ENCODE measurements at regions of chr14 and their contacts with region 1.

Region 1: DNA sequence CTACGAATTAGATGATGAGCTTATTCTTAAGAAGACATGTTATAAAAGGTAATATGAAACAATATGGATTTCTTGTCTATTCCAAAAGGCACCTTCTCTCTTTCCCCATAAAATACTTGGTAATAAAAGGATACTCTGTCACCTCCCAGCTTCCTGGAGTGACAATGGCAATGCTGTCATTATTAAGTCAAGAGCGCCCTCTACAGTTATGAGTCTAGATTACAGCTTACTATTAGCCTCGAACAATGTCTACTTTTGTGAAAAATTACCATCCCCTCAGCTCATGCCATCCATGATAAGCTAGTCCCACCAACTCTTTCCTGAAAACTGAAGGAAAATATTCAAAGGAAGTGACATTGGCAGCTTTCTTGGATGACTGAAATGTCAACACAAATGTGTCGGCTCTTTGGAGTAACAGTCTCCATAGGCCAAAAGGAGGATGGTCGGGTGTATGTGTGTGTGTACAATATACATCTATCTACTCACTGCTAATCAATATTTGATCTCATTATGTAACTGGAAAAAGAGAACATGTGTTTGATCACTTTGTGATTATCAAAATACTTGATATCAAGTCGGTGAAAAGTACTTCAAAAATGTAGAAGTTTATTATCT is 48.7 kb upstream of the CDKN3 start:
- DNase-seq: no peak
- H3K4me3 ChIP-seq: no peak overlapping the region
- H3K27ac ChIP-seq: no peak overlapping the region
- H3K4me1 ChIP-seq: peaks cover 0 to 9% (median 6%) of the 10 kb centered on the region in 4 experiments; a peak in 6 of 7 replicates
- H3K27me3 ChIP-seq: no peaks in the 10 kb centered on the region
- CTCF ChIP-seq: peak in 2 of 3 experiments; percentile 76 to 84; a peak in 3 of 4 replicates
- EP300 ChIP-seq: no peak
- POLR2A ChIP-seq: no peak
- RAD21 ChIP-seq: peak; percentile 95 to 97

Region 2: DNA sequence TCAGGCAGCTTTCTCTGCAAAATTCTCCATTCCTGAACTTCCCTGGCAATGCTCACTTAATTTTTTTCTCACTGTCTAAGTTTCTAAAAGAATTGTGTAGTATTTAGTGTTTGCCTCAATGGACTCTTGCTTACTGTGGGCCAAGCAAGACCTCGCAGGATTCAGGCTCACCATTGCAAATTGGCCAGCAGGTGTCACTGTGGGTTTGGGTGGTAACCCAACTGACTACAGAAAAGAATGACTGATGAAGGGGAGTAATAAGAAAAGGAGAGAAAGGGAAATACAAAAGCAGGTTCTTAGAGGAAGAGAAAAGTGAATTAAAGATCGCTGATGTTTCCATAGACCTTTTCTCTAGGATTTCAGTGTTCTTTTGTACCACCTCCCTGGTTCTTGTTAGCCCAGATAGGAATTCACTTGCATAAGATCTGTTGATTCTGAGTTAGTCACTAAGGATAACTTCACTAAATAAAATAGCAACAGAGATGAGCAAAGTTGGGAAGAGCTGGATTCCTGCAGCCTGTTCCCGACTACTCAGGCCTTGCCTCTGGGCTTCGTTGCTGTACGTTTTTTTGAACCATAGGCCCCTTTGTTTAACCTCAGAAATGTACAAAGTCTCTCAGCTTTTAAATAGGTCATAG is 808.5 kb before region 1 on chr14:
- CTCF ChIA-PET with region 1: interaction called, 21 read pairs
- POLR2A ChIA-PET with region 1: no interaction called
- DNase-seq: peak; percentile 70 to 91
- H3K4me3 ChIP-seq: no peak overlapping the region
- H3K27ac ChIP-seq: no peak overlapping the region
- H3K4me1 ChIP-seq: no peaks in the 10 kb centered on the region
- H3K27me3 ChIP-seq: no peaks in the 10 kb centered on the region
- CTCF ChIP-seq: peak; percentile 75 to 83 (median 82)
- EP300 ChIP-seq: no peak
- POLR2A ChIP-seq: no peak
- RAD21 ChIP-seq: peak; percentile 96 to 97

Region 3: GRCh38 chr14:54189748-54190354 is 158.3 kb before region 1 on chr14:
- CTCF ChIA-PET with region 1: interaction called, 24 read pairs
- POLR2A ChIA-PET with region 1: no interaction called
- DNase-seq: no peak
- H3K4me3 ChIP-seq: no peak overlapping the region
- H3K27ac ChIP-seq: no peak overlapping the region
- H3K4me1 ChIP-seq: no peaks in the 10 kb centered on the region
- H3K27me3 ChIP-seq: no peaks in the 10 kb centered on the region
- CTCF ChIP-seq: no peak
- EP300 ChIP-seq: no peak
- POLR2A ChIP-seq: no peak
- RAD21 ChIP-seq: no peak

Region 4: DNA sequence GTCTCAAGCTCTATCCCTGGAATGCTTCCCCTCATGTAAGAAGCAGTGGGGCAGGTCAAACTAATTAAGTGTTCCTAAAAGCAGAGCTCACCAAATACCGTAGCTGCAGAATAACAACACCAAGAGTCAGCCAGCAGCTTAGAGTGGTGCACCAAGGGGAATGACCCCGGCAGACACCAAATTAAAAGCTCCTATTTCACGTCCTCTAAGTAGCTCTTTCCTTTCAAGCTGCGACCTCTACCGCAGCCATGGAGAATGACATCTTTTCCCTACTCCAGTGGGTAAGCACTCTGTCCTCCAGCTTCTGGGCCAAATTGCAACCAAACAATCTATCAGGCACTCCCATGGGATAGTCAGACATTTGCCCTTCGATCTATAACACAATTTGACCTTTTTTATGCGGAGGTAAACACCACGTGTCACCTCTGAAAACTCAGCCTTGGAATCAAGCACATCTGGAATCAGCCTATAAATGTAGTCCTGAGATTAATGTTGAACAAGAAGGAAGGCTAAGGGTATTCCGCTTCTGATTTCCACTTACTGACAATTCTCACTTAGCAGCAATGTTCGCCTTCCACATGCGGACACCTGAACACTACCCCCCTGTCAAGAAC is 18.9 kb before region 1 on chr14:
- CTCF ChIA-PET with region 1: interaction called, 22 read pairs
- POLR2A ChIA-PET with region 1: no interaction called
- DNase-seq: peak; percentile 62 to 64
- H3K4me3 ChIP-seq: no peak overlapping the region
- H3K27ac ChIP-seq: no peak overlapping the region
- H3K4me1 ChIP-seq: no peaks in the 10 kb centered on the region
- H3K27me3 ChIP-seq: no peaks in the 10 kb centered on the region; a peak in 1 of 7 replicates
- CTCF ChIP-seq: peak; percentile 38 to 95 (median 77)
- EP300 ChIP-seq: no peak
- POLR2A ChIP-seq: no peak
- RAD21 ChIP-seq: peak; percentile 91 to 96

Region 5: GRCh38 chr14:54374117-54374884 is 26.2 kb after region 1 on chr14:
- CTCF ChIA-PET with region 1: interaction called, 12 read pairs
- POLR2A ChIA-PET with region 1: no interaction called
- DNase-seq: peak in 1 of 2 experiments; percentile 30
- H3K4me3 ChIP-seq: no peak overlapping the region
- H3K27ac ChIP-seq: no peak overlapping the region
- H3K4me1 ChIP-seq: peaks cover 1 to 11% (median 3%) of the 10 kb centered on the region in 4 experiments; a peak in 3 of 7 replicates
- H3K27me3 ChIP-seq: no peaks in the 10 kb centered on the region
- CTCF ChIP-seq: no peak
- EP300 ChIP-seq: no peak
- POLR2A ChIP-seq: no peak
- RAD21 ChIP-seq: no peak